Activated CD8-positive, alpha-beta T cell treated with anti-CD3 and anti-CD28 coated beads, Interleukin-2, amount 10 ng/mL, durations not matched to agents 7 days and 5 days (primary cell): ENCODE measurements at regions of chr14 and their contacts with region 1.

Region 1: GRCh38 chr14:88013750-88014349 is 8.9 kb downstream of the GPR65 start:
- DNase-seq: peak; percentile 46
- ATAC-seq: no peak
- H3K4me3 Mint-ChIP-seq: no peak overlapping the region
- H3K27ac Mint-ChIP-seq: peak overlapping the region; percentile 4
- H3K4me1 Mint-ChIP-seq: peaks cover 63% of the 10 kb centered on the region
- H3K27me3 Mint-ChIP-seq: no peaks in the 10 kb centered on the region

Region 2: GRCh38 chr14:87952307-87953094 is 61.3 kb before region 1 on chr14:
- CTCF ChIA-PET with region 1: interaction called, 15 read pairs
- POLR2A ChIA-PET with region 1: no interaction called
- DNase-seq: peak; percentile 45
- ATAC-seq: peak; percentile 88
- H3K4me3 Mint-ChIP-seq: peak overlapping the region; percentile 75
- H3K27ac Mint-ChIP-seq: peak overlapping the region; percentile 94
- H3K4me1 Mint-ChIP-seq: peaks cover 52% of the 10 kb centered on the region
- H3K27me3 Mint-ChIP-seq: no peaks in the 10 kb centered on the region

Region 3: DNA sequence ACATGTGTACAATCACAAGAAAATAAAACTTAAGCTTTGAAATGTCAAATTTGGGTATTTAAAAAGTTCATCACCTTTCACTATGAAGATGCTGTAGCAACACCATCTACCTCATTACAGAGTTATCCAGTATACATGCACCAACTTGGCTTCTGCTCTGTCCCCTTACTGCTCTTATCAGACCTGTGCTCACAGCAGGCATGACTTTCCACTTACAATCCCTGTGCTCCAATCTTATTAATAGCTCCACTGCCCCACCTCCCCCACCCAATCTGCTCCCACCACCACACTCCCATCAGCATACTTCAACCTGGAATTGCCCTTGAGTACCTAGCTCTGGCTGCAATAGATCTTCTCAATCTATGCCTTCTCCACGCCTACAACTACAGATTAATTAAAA is 34.2 kb before region 1 on chr14:
- CTCF ChIA-PET with region 1: no interaction called
- POLR2A ChIA-PET with region 1: no interaction called
- DNase-seq: no peak
- ATAC-seq: no peak
- H3K4me3 Mint-ChIP-seq: no peak overlapping the region
- H3K27ac Mint-ChIP-seq: no peak overlapping the region
- H3K4me1 Mint-ChIP-seq: peaks cover 2% of the 10 kb centered on the region
- H3K27me3 Mint-ChIP-seq: no peaks in the 10 kb centered on the region

Region 4: DNA sequence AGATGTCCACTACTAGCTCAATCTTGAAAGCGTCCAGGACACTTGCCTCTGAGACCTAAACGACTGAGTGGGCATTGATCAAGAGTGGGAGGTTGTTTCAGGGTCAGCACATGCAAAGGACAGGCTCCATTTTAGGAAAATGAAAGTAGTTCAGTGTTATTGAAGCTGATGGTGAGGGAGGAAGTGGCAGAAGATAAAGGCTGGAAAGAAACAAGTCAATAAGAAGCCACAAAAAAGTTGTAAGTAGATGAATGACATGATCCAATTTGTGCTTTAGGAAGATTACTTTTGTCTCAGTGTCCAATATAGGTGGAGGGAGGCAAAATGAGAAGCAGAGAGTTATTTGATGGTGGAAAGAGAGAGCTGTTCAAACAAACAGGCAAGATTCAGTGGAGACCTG is 13.0 kb after region 1 on chr14:
- CTCF ChIA-PET with region 1: interaction called, 14 read pairs
- POLR2A ChIA-PET with region 1: interaction called, 3 read pairs
- DNase-seq: peak; percentile 29
- ATAC-seq: peak; percentile 64
- H3K4me3 Mint-ChIP-seq: peak overlapping the region; percentile 54
- H3K27ac Mint-ChIP-seq: peak overlapping the region; percentile 94
- H3K4me1 Mint-ChIP-seq: peaks cover 84% of the 10 kb centered on the region
- H3K27me3 Mint-ChIP-seq: no peaks in the 10 kb centered on the region

Region 5: DNA sequence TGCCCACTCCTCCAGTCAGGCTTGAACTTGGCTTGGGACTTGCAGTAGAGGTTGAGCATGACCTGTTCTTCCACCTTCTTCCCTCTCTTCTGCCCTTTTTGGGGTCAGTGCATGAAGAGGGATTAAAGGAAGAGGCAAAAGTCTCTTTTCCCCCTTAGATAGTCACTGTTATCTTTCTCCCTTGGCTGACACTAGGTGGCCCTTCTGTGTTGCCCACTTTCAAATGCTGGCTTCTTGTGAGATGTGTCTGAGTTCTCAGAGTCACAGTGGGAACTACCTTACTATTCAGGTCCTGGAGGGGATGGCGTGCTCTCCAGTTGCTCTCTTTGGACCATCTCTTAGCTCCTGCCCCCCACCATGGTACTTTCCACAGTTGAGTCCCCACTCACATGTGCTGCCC is 64.7 kb after region 1 on chr14:
- CTCF ChIA-PET with region 1: no interaction called
- POLR2A ChIA-PET with region 1: no interaction called
- DNase-seq: no peak
- ATAC-seq: no peak
- H3K4me3 Mint-ChIP-seq: no peak overlapping the region
- H3K27ac Mint-ChIP-seq: no peak overlapping the region
- H3K4me1 Mint-ChIP-seq: no peaks in the 10 kb centered on the region
- H3K27me3 Mint-ChIP-seq: peaks cover 6% of the 10 kb centered on the region